ENCODE measurements at regions of chr1 and their contacts with region 1.

Region 1: DNA sequence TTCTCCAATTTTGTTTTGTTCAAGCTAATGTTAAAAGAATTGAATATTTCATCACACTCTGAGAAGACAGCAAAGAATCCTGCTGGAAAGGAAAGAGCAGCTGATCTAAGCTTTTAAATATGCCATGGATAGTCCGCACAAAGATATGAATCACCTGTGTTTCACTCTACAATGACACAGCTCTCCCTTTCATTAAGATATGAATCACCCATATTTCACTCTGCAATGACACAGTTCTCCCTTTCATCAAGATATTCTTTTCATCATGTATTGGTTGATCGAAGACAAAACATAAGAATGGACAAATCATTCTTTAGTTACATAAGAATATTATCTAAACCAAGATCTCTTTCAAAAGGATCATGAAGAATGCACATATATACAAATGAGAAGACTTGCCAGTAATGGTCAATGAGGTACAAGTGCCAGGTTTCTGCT is 367.3 kb downstream of the SMYD3 start:
- DNase-seq: no peak
- H3K4me3 ChIP-seq: no peak overlapping the region
- H3K27ac ChIP-seq: no peak overlapping the region
- H3K4me1 ChIP-seq: no peaks in the 10 kb centered on the region
- H3K27me3 ChIP-seq: no peaks in the 10 kb centered on the region
- CTCF ChIP-seq: no peak

Region 2: DNA sequence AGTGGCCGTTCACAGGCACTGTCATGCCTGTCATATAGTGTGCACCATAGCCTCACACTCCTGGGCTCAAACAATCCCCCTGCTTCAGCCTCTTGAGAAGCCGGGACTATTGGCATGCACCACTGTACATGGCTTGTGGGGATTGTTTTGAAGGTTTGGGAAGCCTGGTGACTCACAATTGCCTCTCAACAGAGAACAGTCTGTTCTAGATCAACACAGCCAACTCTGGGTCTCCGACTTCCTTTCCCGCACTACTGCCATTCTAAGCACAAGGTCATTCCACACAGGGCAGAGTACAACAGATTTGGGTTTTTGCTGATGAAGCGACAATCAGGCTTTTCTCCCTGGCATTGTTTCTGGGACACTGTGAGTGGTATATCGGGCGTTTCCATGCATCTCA is 807.5 kb after region 1 on chr1:
- CTCF ChIA-PET with region 1: no interaction called
- POLR2A ChIA-PET with region 1: no interaction called
- intact Hi-C with region 1: loop called (anchors 5 kb)
- DNase-seq: no peak
- H3K4me3 ChIP-seq: no peak overlapping the region
- H3K27ac ChIP-seq: no peak overlapping the region
- H3K4me1 ChIP-seq: no peaks in the 10 kb centered on the region
- H3K27me3 ChIP-seq: no peaks in the 10 kb centered on the region
- CTCF ChIP-seq: no peak

Measured in A673 (cell line).